Activated CD4-positive, alpha-beta T cell treated with anti-CD3 and anti-CD28 coated beads for 36 hours (primary cell): ENCODE measurements at regions of chr15 and their contacts with region 1.

Region 1: GRCh38 chr15:58331903-58332675 is 99.7 kb upstream of the LIPC start:
- DNase-seq: peak; percentile 96
- ATAC-seq: peak; percentile 93
- H3K4me3 Mint-ChIP-seq: peak overlapping the region; percentile 53
- H3K27ac Mint-ChIP-seq: peak overlapping the region; percentile 96
- H3K4me1 Mint-ChIP-seq: peaks cover 47% of the 10 kb centered on the region
- H3K27me3 Mint-ChIP-seq: peaks cover under 1% of the 10 kb centered on the region

Region 2: DNA sequence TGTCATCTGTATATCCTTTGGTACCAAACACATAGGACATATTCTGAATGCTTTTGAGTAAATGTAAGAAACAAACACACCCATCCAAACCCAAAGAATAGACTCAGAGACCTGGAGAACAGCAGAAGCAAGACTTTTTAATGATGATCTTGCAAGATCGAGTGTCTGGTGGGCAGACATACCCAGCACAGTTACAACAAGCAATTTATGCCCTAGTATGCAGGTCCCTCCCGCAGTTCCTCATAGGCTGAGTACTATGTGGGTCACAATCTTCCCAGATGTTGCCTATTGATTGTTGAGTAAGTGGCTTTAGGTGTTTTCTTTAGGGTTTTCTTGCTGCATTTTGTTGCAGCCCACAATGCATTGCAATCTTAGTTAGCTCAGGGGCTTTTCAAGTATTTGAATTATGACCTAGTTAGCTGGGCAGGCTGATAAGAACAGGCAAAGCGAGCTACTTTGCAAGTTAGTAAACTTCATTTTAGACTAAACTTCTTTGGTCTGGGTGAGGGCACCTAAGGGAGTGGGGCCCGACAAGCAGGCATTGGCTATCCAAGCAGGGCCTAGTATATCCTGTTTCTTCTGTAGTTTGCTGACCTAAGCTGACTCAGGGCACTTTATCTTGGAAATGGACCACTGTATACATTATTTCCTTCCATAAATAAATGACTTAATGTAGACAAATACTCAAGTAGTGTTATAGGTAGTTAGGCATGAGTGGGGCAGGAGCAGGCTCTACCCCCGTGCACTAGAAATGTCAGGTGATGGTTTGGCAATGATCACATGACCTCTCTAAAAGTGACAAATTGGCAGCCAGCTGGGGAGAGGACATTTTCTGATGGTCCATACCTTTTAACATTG is 12.4 kb after region 1 on chr15:
- CTCF ChIA-PET with region 1: interaction called, 10 read pairs
- POLR2A ChIA-PET with region 1: interaction called, 7 read pairs
- intact Hi-C with region 1: no loop called
- DNase-seq: no peak
- ATAC-seq: no peak
- H3K4me3 Mint-ChIP-seq: no peak overlapping the region
- H3K27ac Mint-ChIP-seq: no peak overlapping the region
- H3K4me1 Mint-ChIP-seq: peaks cover 4% of the 10 kb centered on the region
- H3K27me3 Mint-ChIP-seq: no peaks in the 10 kb centered on the region

Region 3: GRCh38 chr15:58383876-58384275 is 51.8 kb after region 1 on chr15:
- CTCF ChIA-PET with region 1: no interaction called
- POLR2A ChIA-PET with region 1: no interaction called
- intact Hi-C with region 1: loop called in 1 of 2 experiments (anchors 1 kb)
- DNase-seq: peak; percentile 66
- ATAC-seq: peak; percentile 97
- H3K4me3 Mint-ChIP-seq: no peak overlapping the region
- H3K27ac Mint-ChIP-seq: peak overlapping the region; percentile 83
- H3K4me1 Mint-ChIP-seq: peaks cover 18% of the 10 kb centered on the region
- H3K27me3 Mint-ChIP-seq: no peaks in the 10 kb centered on the region

Region 4: GRCh38 chr15:58469432-58470353 is 137.6 kb after region 1 on chr15:
- CTCF ChIA-PET with region 1: no interaction called
- POLR2A ChIA-PET with region 1: interaction called, 3 read pairs
- intact Hi-C with region 1: loop called in 1 of 2 experiments (anchors 5 kb)
- DNase-seq: no peak
- ATAC-seq: no peak
- H3K4me3 Mint-ChIP-seq: no peak overlapping the region
- H3K27ac Mint-ChIP-seq: no peak overlapping the region
- H3K4me1 Mint-ChIP-seq: peaks cover 35% of the 10 kb centered on the region
- H3K27me3 Mint-ChIP-seq: no peaks in the 10 kb centered on the region

Region 5: GRCh38 chr15:58749532-58750337 is 417.6 kb after region 1 on chr15 and contains the start of gene ADAM10:
- CTCF ChIA-PET with region 1: interaction called, 3 read pairs
- POLR2A ChIA-PET with region 1: no interaction called
- intact Hi-C with region 1: loop called in 1 of 2 experiments (anchors 1 kb)
- DNase-seq: peak; percentile 99
- ATAC-seq: peak; percentile 95
- H3K4me3 Mint-ChIP-seq: peak within 1 kb of the TSS; percentile 80
- H3K27ac Mint-ChIP-seq: peak within 1 kb of the TSS; percentile 93
- H3K4me1 Mint-ChIP-seq: peaks cover 36% of the 10 kb centered on the region
- H3K27me3 Mint-ChIP-seq: no peaks in the 10 kb centered on the region
- total RNA-seq, gene ADAM10: 74.5 to 82.0 TPM

Region 6: GRCh38 chr15:58933281-58934113 is 601.4 kb after region 1 on chr15 and contains the start of gene SLTM:
- CTCF ChIA-PET with region 1: no interaction called
- POLR2A ChIA-PET with region 1: no interaction called
- intact Hi-C with region 1: loop called in 1 of 2 experiments (anchors 1 kb)
- DNase-seq: peak; percentile 96
- ATAC-seq: peak; percentile 94
- H3K4me3 Mint-ChIP-seq: peak within 1 kb of the TSS; percentile 90
- H3K27ac Mint-ChIP-seq: peak within 1 kb of the TSS; percentile 100
- H3K4me1 Mint-ChIP-seq: peaks cover 17% of the 10 kb centered on the region
- H3K27me3 Mint-ChIP-seq: no peaks in the 10 kb centered on the region
- total RNA-seq, gene SLTM: 85.6 to 85.9 TPM